ENCODE measurements at regions of chr3 and their contacts with region 1.

Region 1: GRCh38 chr3:171772427-171773056 is 37.7 kb downstream of the PLD1 start:
- DNase-seq: peak; percentile 57 to 64
- H3K4me3 ChIP-seq: no peak overlapping the region
- H3K4me3 Mint-ChIP-seq: no peak overlapping the region
- H3K27ac Mint-ChIP-seq: no peak overlapping the region
- H3K4me1 ChIP-seq: no peaks in the 10 kb centered on the region
- H3K4me1 Mint-ChIP-seq: peaks cover 9% of the 10 kb centered on the region
- H3K27me3 ChIP-seq: no peaks in the 10 kb centered on the region
- H3K27me3 Mint-ChIP-seq: no peaks in the 10 kb centered on the region
- CTCF ChIP-seq: peak; percentile 66 to 74

Region 2: GRCh38 chr3:170869645-170870593 is 902.6 kb before region 1 on chr3 and contains the start of gene RPL22L1:
- CTCF ChIA-PET with region 1: no interaction called
- POLR2A ChIA-PET with region 1: interaction called, 11 read pairs
- intact Hi-C with region 1: no loop called
- DNase-seq: peak; percentile 92 to 94
- H3K4me3 ChIP-seq: peak within 1 kb of the TSS; percentile 80
- H3K4me3 Mint-ChIP-seq: peak within 1 kb of the TSS; percentile 100
- H3K27ac Mint-ChIP-seq: peak within 1 kb of the TSS; percentile 100
- H3K4me1 ChIP-seq: peaks cover 11% of the 10 kb centered on the region; the same call in 1 of the 2 replicates
- H3K4me1 Mint-ChIP-seq: peaks cover 8% of the 10 kb centered on the region
- H3K27me3 ChIP-seq: no peaks in the 10 kb centered on the region
- H3K27me3 Mint-ChIP-seq: no peaks in the 10 kb centered on the region
- CTCF ChIP-seq: peak in 1 of 2 experiments; percentile 3
- total RNA-seq, gene RPL22L1: 31.1 and 37.7 TPM in 2 replicates

Region 3: DNA sequence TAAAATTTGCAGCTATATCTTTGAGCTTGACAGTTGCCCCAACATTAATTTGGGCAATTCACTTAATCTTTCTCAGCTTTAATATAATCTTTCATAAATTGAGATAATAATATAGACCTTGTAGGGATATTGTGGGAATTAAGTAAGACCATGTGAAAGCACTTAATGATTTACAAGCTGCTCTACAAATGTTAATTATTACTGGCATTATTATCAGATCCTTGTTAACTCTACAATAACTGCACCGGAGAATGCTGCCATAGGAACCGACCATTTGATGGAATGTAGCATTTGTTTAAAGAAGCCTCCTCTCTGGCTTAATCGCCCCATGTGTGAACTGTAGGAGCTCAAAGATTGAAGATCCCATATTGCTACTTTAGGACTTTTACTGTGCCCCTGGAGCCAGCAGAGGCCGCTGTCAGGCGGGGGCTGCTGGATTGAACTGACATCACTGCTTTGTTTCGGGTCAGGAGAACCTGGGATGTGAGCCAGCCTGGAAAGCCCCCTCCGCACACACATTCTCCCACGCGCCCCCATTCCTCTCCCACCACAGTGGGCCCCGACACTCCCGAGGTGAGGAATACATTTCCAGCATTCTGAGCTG is 158.1 kb before region 1 on chr3:
- CTCF ChIA-PET with region 1: interaction called, 11 read pairs
- POLR2A ChIA-PET with region 1: no interaction called
- intact Hi-C with region 1: no loop called
- DNase-seq: peak in 1 of 2 experiments; percentile 5
- H3K4me3 ChIP-seq: no peak overlapping the region
- H3K4me3 Mint-ChIP-seq: no peak overlapping the region
- H3K27ac Mint-ChIP-seq: no peak overlapping the region
- H3K4me1 ChIP-seq: no peaks in the 10 kb centered on the region
- H3K4me1 Mint-ChIP-seq: peaks cover 5% of the 10 kb centered on the region
- H3K27me3 ChIP-seq: no peaks in the 10 kb centered on the region
- H3K27me3 Mint-ChIP-seq: no peaks in the 10 kb centered on the region
- CTCF ChIP-seq: peak in 1 of 2 experiments; percentile 49

Region 4: DNA sequence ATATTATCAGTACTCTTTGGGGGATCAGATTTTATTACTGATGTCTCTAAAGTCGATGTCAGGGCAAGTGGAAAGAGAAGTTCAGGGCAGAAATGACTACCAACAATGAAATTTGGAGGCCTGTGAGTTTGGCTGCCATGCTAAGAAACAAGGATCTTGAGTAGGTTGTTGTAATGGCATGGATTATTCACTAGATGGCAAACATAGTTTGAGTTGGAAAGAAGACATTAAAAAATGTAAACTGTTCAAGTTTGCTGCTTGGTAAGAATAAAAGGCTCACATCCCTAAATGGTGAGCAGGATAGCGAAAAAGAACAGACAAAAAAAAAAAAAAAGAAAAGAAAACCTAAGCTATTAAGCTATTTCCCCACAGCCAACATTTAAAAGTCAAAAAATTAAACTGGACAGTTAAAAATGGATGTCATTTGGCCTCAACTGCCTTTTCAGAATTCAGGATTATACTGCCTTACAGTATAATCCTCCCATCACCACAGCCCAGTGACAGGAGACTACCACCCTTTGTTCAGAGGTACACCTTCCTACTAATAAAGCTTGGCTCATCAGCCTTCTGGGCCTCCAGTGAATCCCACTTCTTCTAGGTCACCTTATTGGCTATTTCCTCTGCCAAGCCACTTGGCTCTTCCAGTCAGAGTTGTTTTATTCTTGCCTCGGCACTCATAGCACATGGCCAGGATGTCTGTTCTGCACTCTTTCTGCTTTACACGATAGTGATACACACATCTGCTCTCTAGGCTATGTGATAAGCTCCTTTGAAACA is 126.0 kb before region 1 on chr3:
- CTCF ChIA-PET with region 1: interaction called, 26 read pairs
- POLR2A ChIA-PET with region 1: no interaction called
- intact Hi-C with region 1: loop called (anchors 1 kb)
- DNase-seq: peak in 1 of 2 experiments; percentile 21
- H3K4me3 ChIP-seq: no peak overlapping the region
- H3K4me3 Mint-ChIP-seq: no peak overlapping the region
- H3K27ac Mint-ChIP-seq: no peak overlapping the region
- H3K4me1 ChIP-seq: no peaks in the 10 kb centered on the region
- H3K4me1 Mint-ChIP-seq: no peaks in the 10 kb centered on the region
- H3K27me3 ChIP-seq: no peaks in the 10 kb centered on the region
- H3K27me3 Mint-ChIP-seq: no peaks in the 10 kb centered on the region
- CTCF ChIP-seq: peak; percentile 55 to 66

Region 5: GRCh38 chr3:171703756-171704401 is 68.7 kb before region 1 on chr3:
- CTCF ChIA-PET with region 1: interaction called, 4 read pairs
- POLR2A ChIA-PET with region 1: no interaction called
- intact Hi-C with region 1: loop called (anchors 1 kb)
- DNase-seq: peak in 1 of 2 experiments; percentile 42
- H3K4me3 ChIP-seq: no peak overlapping the region
- H3K4me3 Mint-ChIP-seq: no peak overlapping the region
- H3K27ac Mint-ChIP-seq: no peak overlapping the region
- H3K4me1 ChIP-seq: no peaks in the 10 kb centered on the region
- H3K4me1 Mint-ChIP-seq: no peaks in the 10 kb centered on the region
- H3K27me3 ChIP-seq: no peaks in the 10 kb centered on the region
- H3K27me3 Mint-ChIP-seq: no peaks in the 10 kb centered on the region
- CTCF ChIP-seq: peak in 1 of 2 experiments; percentile 61

Region 6: GRCh38 chr3:171729452-171730334 is 42.8 kb before region 1 on chr3:
- CTCF ChIA-PET with region 1: no interaction called
- POLR2A ChIA-PET with region 1: no interaction called
- intact Hi-C with region 1: no loop called
- DNase-seq: no peak
- H3K4me3 ChIP-seq: no peak overlapping the region
- H3K4me3 Mint-ChIP-seq: no peak overlapping the region
- H3K27ac Mint-ChIP-seq: no peak overlapping the region
- H3K4me1 ChIP-seq: no peaks in the 10 kb centered on the region
- H3K4me1 Mint-ChIP-seq: no peaks in the 10 kb centered on the region
- H3K27me3 ChIP-seq: no peaks in the 10 kb centered on the region
- H3K27me3 Mint-ChIP-seq: no peaks in the 10 kb centered on the region
- CTCF ChIP-seq: no peak

Measured in Caco-2 (cell line).